ENCODE measurements at regions of chr7 and their contacts with region 1.

Region 1: DNA sequence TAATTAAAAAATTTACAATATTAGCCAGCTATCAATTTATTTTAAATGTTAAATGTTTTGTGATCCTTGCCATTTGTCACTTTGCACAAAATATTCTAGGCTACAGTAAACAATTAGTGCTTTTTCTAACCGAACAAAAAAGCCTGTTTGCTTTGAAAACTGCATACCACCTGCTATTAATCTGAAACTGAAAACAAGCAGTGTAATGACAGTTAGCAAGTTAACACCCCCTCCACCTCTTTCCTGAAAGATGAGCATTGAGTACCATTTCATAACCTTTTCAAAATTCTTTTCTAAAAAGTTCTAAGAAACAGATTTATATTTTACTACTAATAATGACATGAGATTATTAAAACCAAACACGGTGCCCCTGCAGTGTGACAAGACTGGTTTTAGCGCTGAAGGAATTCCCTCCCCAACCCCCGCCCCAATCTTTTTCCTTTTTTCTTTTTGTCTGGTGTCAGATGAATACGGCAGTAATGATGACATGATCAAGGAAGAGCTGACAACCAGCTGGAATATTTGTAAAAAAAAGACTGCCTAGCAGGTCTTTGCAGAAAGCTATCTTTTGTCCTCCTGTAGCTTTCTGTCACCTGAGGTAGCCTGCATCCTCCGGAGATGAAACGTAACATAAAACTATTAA is 175.6 kb downstream of the CHCHD3 start:
- DNase-seq: no peak
- H3K4me3 ChIP-seq: no peak overlapping the region
- H3K4me3 Mint-ChIP-seq: no peak overlapping the region
- H3K27ac Mint-ChIP-seq: no peak overlapping the region
- H3K4me1 ChIP-seq: peaks cover 6% of the 10 kb centered on the region
- H3K4me1 Mint-ChIP-seq: peaks cover 4% of the 10 kb centered on the region
- H3K27me3 ChIP-seq: no peaks in the 10 kb centered on the region
- H3K27me3 Mint-ChIP-seq: no peaks in the 10 kb centered on the region
- CTCF ChIP-seq: no peak

Region 2: GRCh38 chr7:132866144-132866531 is 40.2 kb before region 1 on chr7:
- CTCF ChIA-PET with region 1: no interaction called
- POLR2A ChIA-PET with region 1: interaction called, 15 read pairs
- intact Hi-C with region 1: no loop called
- DNase-seq: no peak
- H3K4me3 ChIP-seq: no peak overlapping the region
- H3K4me3 Mint-ChIP-seq: no peak overlapping the region
- H3K27ac Mint-ChIP-seq: no peak overlapping the region
- H3K4me1 ChIP-seq: no peaks in the 10 kb centered on the region
- H3K4me1 Mint-ChIP-seq: no peaks in the 10 kb centered on the region
- H3K27me3 ChIP-seq: no peaks in the 10 kb centered on the region
- H3K27me3 Mint-ChIP-seq: no peaks in the 10 kb centered on the region
- CTCF ChIP-seq: no peak

Region 3: DNA sequence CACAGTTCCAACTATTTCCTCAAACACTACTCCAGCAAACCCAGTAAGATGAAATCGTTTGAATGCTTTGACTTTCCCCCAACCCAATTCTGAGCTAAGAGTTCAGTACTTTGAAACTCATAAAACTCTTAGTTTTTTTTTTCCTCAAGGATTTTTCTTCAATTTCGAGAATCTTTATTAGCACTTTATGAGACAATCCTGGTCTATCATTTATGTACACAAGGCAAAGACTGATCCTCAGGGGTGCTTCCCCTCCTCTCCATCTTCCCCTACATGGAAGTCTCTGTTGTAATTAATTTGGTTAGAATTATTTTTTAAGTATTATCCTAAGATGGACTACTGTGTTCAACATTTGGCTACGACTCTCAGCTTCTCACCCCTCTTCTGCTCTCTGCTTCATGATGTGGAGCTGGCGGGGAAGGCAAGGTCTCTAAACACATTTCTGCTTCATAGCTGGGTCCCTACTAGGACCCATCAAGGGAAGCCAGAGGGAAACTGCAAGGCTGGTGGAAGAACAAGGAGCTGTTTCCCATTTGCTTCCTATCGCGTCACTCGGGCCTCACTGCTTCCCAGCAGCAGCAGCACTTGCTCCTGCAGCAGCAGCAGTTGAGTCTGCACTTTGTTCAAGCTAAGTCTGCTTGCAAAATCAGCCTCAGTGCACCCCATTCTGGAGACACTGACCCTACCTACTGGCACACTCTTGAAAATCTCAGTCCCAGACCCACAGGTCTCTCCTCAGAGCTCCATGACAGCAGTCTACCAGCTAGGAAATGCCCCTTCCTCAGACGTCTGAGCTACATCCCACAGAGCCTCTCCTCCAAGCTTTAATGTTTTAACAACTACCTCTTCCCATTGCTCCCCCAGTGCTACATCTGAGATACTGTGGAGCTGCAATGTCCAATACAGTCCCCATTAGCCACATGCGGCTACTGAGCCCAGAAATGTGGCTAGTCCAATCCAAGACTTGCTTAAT is 85.6 kb after region 1 on chr7:
- CTCF ChIA-PET with region 1: no interaction called
- POLR2A ChIA-PET with region 1: no interaction called
- intact Hi-C with region 1: no loop called
- DNase-seq: no peak
- H3K4me3 ChIP-seq: no peak overlapping the region
- H3K4me3 Mint-ChIP-seq: no peak overlapping the region
- H3K27ac Mint-ChIP-seq: no peak overlapping the region
- H3K4me1 ChIP-seq: 0 out of 2 replicates have a peak, but pooled peaks cover 4% of the 10 kb centered on the region
- H3K4me1 Mint-ChIP-seq: peaks cover 15% of the 10 kb centered on the region
- H3K27me3 ChIP-seq: no peaks in the 10 kb centered on the region
- H3K27me3 Mint-ChIP-seq: no peaks in the 10 kb centered on the region
- CTCF ChIP-seq: no peak

Measured in Caco-2 (cell line).